Heart right ventricle (tissue), 16 donors: ENCODE measurements at regions of chr3 and their contacts with region 1.

Region 1: DNA sequence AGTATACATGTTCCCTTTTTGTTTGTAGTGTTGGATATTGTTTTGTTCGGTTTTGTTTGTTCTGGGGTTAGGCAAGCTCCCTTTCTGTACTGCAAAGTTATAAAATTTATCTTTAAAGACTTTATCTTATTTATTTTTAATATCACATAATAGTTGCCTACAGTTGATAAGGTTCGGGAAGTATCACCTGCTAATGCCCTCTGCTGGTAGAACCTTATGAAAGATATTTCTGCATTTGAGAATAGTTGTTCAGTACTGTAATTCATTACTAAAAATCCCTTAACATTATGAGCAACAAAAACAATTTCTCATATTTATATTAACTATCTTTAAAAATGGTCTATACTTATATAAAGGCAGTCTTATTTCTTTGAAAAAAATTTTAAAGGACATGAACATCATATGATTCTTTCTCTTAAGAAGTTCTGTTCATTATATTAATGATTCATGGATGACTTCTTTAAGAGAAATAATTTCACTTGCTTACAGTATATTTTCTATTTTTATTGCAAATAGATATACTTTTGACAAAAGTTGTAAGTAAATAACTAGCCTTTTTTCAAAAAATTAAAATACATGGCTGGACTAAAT is 1126.8 kb downstream of the SI start:
- DNase-seq: no peak
- ATAC-seq: no peak
- H3K4me3 ChIP-seq: no peak overlapping the region
- H3K27ac ChIP-seq: no peak overlapping the region
- H3K4me1 ChIP-seq: no peaks in the 10 kb centered on the region
- H3K27me3 ChIP-seq: no peaks in the 10 kb centered on the region
- CTCF ChIP-seq: peak in 7 of 9 donors; percentile 5 to 39 (median 15)

Region 2: GRCh38 chr3:164179110-164179774 is 227.8 kb after region 1 on chr3:
- intact Hi-C with region 1: no loop called
- DNase-seq: no peak
- ATAC-seq: no peak
- H3K4me3 ChIP-seq: no peak overlapping the region
- H3K27ac ChIP-seq: no peak overlapping the region
- H3K4me1 ChIP-seq: no peaks in the 10 kb centered on the region
- H3K27me3 ChIP-seq: no peaks in the 10 kb centered on the region
- CTCF ChIP-seq: no peak

Region 3: GRCh38 chr3:165185707-165186327 is 1234.3 kb after region 1 on chr3:
- intact Hi-C with region 1: loop called in 1 of 10 experiments (anchors 10 kb)
- DNase-seq: peak in 1 of 2 donors; percentile 29
- ATAC-seq: peak in 6 of 8 donors; percentile 62 to 87 (median 68)
- H3K4me3 ChIP-seq: no peak overlapping the region
- H3K27ac ChIP-seq: no peak overlapping the region
- H3K4me1 ChIP-seq: no peaks in the 10 kb centered on the region
- H3K27me3 ChIP-seq: peaks cover 0 to 11% (median 0%) of the 10 kb centered on the region in 7 donors
- CTCF ChIP-seq: peak; percentile 50 to 86 (median 81)